PC-9 (cell line): ENCODE measurements at regions of chr9 and their contacts with region 1.

Region 1: GRCh38 chr9:11319538-11319937 is 706.7 kb upstream of the PTPRD start:
- DNase-seq: no peak
- H3K4me3 ChIP-seq: no peak overlapping the region
- H3K27ac ChIP-seq: no peak overlapping the region
- H3K4me1 ChIP-seq: no peaks in the 10 kb centered on the region
- H3K27me3 ChIP-seq: no peaks in the 10 kb centered on the region
- CTCF ChIP-seq: peak; percentile 60

Region 2: GRCh38 chr9:10855852-10856251 is 463.7 kb before region 1 on chr9:
- CTCF ChIA-PET with region 1: no interaction called
- POLR2A ChIA-PET with region 1: no interaction called
- intact Hi-C with region 1: loop called (anchors 1 kb)
- DNase-seq: no peak
- H3K4me3 ChIP-seq: no peak overlapping the region
- H3K27ac ChIP-seq: no peak overlapping the region
- H3K4me1 ChIP-seq: no peaks in the 10 kb centered on the region
- H3K27me3 ChIP-seq: no peaks in the 10 kb centered on the region
- CTCF ChIP-seq: peak; percentile 64

Region 3: GRCh38 chr9:11356067-11356466 is 36.5 kb after region 1 on chr9:
- CTCF ChIA-PET with region 1: no interaction called
- POLR2A ChIA-PET with region 1: no interaction called
- intact Hi-C with region 1: no loop called
- DNase-seq: no peak
- H3K4me3 ChIP-seq: no peak overlapping the region
- H3K27ac ChIP-seq: no peak overlapping the region
- H3K4me1 ChIP-seq: no peaks in the 10 kb centered on the region
- H3K27me3 ChIP-seq: no peaks in the 10 kb centered on the region
- CTCF ChIP-seq: no peak